Head of caudate nucleus (tissue), 42 donors: ENCODE measurements at regions of chr4 and their contacts with region 1.

Region 1: GRCh38 chr4:47562297-47562696 is 77.2 kb downstream of the ATP10D start:
- DNase-seq: no peak

Region 2: GRCh38 chr4:47485047-47485692 is 77.1 kb before region 1 on chr4 and contains the start of gene ATP10D:
- intact Hi-C with region 1: loop called (anchors 10 kb)
- DNase-seq: peak; percentile 91 to 99 (median 97)